MCF 10A (cell line): ENCODE measurements at regions of chr16 and their contacts with region 1.

Region 1: GRCh38 chr16:27367461-27368357 is 34.3 kb upstream of the IL21R start:
- DNase-seq: peak; percentile 78
- H3K4me3 Mint-ChIP-seq: peak overlapping the region; percentile 39
- H3K27ac Mint-ChIP-seq: no peak overlapping the region
- H3K4me1 Mint-ChIP-seq: peaks cover 6% of the 10 kb centered on the region
- H3K27me3 Mint-ChIP-seq: no peaks in the 10 kb centered on the region
- CTCF ChIP-seq: peak; percentile 91

Region 2: DNA sequence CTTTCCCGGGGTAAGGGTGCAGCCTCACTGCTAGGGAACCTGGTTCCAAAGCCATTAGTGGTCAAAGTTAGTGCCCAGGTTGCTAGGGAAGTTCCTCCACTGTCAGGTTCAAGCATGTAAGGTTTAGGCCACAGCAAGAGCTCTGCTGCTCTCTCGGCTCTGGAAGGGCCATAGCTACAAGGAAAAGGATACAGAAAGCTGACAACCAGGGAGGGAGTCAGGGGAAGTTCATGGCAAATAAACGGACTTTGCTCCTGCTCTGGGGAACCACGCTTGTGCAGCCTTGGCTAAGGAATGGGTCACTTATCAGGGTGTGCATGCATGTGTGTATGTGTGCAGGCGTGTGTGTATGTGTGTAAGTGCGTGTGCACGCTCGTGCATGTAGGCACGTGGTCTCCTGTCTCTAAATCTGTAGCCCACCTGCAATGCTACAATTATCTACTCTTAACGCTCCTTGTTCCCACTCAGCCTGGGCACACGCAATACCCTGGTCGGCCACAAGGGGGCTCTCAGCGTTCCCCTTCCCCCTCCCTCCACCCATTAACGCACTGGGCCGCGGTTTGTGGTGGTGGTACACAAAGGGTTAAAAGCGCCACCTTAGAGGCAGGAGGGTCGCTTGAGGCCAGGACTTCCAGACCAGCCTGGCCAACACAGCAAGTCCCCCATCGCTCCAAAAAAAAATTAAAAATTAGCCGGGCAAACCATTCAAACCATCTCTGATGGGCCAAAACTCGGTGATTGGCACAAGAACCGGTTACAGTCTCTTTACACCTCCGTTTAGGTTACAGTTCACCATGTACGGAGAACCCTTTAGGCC is 212.8 kb before region 1 on chr16:
- CTCF ChIA-PET with region 1: interaction called, 91 read pairs
- POLR2A ChIA-PET with region 1: interaction called, 3 read pairs
- intact Hi-C with region 1: loop called (anchors 1 kb)
- DNase-seq: peak; percentile 48
- H3K4me3 Mint-ChIP-seq: no peak overlapping the region
- H3K27ac Mint-ChIP-seq: no peak overlapping the region
- H3K4me1 Mint-ChIP-seq: no peaks in the 10 kb centered on the region
- H3K27me3 Mint-ChIP-seq: no peaks in the 10 kb centered on the region
- CTCF ChIP-seq: peak; percentile 85

Region 3: DNA sequence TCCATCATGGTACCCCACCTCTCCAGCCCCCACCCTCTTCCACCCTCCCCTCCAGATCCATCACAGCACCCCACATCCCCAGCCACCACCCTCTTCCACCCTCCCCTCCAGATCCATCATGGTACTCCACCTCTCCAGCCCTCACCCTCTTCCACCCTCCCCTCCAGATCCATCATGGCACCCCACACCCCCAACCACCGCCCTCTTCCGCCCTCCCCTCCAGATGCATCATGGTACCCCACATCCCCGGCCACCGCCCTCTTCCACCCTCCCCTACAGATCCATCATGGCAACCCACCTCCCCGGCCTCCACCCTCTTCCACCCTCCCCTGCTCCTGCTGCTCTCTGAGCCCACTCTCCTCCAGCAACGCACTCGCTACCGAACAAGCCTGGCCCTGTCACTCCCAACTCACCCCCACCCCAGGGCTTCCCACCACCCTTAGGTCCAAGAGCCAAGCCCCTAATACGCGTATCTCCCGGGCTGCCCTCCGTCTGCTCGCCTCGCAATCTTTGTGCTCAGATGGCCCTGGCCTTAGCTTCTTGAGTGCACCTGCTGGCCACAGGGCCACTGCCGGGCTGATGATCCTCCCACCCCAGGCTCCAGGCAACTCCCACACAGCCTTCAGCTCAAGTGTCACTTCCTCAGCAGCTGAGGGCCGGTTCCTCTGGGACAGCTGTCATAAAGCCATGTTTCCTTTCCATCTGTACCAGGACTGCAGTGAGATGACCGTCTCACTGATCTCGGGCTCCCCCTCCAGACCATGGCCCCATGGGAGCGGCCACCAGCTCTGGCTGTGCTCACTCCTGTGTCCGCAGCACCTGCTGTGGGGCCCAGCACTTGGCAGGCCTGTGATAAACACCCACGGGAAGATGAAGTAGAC is 138.8 kb before region 1 on chr16:
- CTCF ChIA-PET with region 1: interaction called, 248 read pairs
- POLR2A ChIA-PET with region 1: interaction called, 8 read pairs
- intact Hi-C with region 1: no loop called
- DNase-seq: no peak
- H3K4me3 Mint-ChIP-seq: no peak overlapping the region
- H3K27ac Mint-ChIP-seq: no peak overlapping the region
- H3K4me1 Mint-ChIP-seq: no peaks in the 10 kb centered on the region
- H3K27me3 Mint-ChIP-seq: no peaks in the 10 kb centered on the region
- CTCF ChIP-seq: no peak

Region 4: DNA sequence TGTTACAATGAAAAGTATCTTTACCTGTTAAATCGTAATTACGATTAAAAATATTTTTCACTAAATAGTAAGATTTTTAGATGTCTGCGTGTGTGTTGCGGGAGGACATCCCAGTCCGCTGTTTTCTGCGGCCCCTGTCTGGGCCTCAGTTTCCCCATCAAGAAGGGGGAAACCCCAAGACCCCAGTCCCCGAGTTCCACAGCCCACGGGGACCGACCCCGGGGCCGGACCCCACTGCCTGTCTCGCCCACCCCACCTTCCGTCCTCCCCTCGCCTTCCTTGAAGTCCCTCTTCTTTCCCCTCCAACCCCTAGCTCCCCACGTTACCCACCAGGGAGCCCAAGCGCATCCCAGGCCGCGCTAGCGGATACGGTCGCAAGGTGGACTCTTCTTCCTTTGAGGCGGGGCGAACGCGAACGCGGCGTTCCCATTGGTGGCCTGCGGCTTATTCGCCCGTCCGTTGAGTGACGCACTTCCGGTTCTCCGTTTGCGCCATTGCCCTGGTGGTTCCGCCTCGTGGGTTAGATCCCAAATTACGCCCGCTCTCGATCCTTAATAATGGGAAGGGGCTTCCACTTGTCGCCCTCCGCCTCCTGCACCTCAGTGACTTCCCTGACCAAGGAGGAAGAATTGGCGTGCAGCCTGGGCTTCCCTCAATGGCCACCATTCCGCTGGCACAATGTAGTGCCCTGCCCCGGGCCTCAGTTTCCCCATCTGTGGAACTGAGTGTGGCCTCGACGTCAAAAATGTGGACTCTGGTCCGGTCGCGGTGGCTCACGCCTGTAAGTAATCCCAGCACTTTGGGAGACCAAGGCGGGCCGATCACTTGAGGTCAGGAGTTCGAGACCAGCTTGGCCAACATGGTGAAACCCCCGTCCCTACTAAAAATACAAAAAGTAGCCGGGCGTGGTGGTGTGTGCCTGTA is 99.1 kb before region 1 on chr16 and contains the start of gene NSMCE1:
- CTCF ChIA-PET with region 1: interaction called, 13 read pairs
- POLR2A ChIA-PET with region 1: interaction called, 11 read pairs
- intact Hi-C with region 1: no loop called
- DNase-seq: peak; percentile 96
- H3K4me3 Mint-ChIP-seq: peak within 1 kb of the TSS; percentile 94
- H3K27ac Mint-ChIP-seq: peak within 1 kb of the TSS; percentile 99
- H3K4me1 Mint-ChIP-seq: peaks cover 27% of the 10 kb centered on the region
- H3K27me3 Mint-ChIP-seq: no peaks in the 10 kb centered on the region
- CTCF ChIP-seq: no peak
- total RNA-seq, gene NSMCE1: 106 and 119 TPM in 2 replicates

Region 5: GRCh38 chr16:27335349-27336053 is 32.2 kb before region 1 on chr16:
- CTCF ChIA-PET with region 1: interaction called, 13 read pairs
- POLR2A ChIA-PET with region 1: no interaction called
- intact Hi-C with region 1: no loop called
- DNase-seq: no peak
- H3K4me3 Mint-ChIP-seq: no peak overlapping the region
- H3K27ac Mint-ChIP-seq: no peak overlapping the region
- H3K4me1 Mint-ChIP-seq: no peaks in the 10 kb centered on the region
- H3K27me3 Mint-ChIP-seq: no peaks in the 10 kb centered on the region
- CTCF ChIP-seq: no peak

Region 6: GRCh38 chr16:27461483-27462171 is 93.9 kb after region 1 on chr16:
- CTCF ChIA-PET with region 1: interaction called, 20 read pairs
- POLR2A ChIA-PET with region 1: no interaction called
- intact Hi-C with region 1: no loop called
- DNase-seq: no peak
- H3K4me3 Mint-ChIP-seq: no peak overlapping the region
- H3K27ac Mint-ChIP-seq: peak overlapping the region; percentile 16
- H3K4me1 Mint-ChIP-seq: no peaks in the 10 kb centered on the region
- H3K27me3 Mint-ChIP-seq: no peaks in the 10 kb centered on the region
- CTCF ChIP-seq: no peak